ENCODE measurements at regions of chr19 and their contacts with region 1.

Region 1: DNA sequence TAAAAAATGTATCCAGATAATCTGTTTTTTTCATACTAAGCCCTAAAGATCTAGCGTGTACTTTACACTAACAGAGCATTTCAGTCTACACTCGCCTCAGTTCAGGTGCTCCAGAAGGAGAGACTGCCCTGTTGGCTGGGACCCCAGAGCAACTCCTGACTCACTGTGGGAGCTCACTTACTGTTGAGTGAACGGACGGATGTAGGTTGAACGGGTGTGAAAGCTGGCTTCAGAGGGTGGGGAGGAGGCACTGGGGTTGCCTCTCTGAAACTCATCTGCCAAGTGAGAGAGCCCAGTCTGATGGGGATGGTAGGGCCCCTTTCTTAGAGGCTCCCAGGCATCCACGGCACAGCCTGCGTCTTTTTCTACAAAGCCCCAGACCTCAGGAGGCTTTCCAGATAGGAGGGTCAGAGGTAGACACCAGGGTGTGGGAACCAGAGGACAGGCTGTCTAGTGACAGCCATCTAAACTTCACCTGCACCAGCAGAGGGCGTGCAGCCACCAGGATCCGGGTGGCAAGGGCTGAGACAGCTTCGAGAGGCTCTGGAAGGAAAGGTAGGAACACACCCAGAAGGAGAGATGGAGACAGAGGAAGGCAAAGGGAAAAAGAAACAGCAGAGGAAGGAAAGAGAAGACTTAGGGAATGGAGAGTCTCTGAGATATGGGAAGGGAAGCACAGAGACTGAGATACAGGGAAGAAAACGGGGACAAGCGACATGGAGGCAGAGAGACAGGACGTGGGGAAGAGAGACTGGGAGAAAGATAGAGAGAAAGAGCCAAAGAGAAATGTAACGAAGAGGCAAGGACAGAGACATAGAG is 3.7 kb downstream of the KASH5 start:
- DNase-seq: peak; percentile 40
- ATAC-seq: peak; percentile 96
- H3K4me3 ChIP-seq: no peak overlapping the region
- H3K27ac ChIP-seq: no peak overlapping the region
- H3K4me1 ChIP-seq: no peaks in the 10 kb centered on the region; the same call in 1 of the 2 replicates
- H3K27me3 ChIP-seq: no peaks in the 10 kb centered on the region
- CTCF ChIP-seq: peak; percentile 84 to 97 (median 90); a peak in 5 of 6 replicates
- EP300 ChIP-seq: no peak
- POLR2A ChIP-seq: no peak
- RAD21 ChIP-seq: peak; percentile 97

Region 2: GRCh38 chr19:49165111-49165750 is 226.6 kb before region 1 on chr19:
- CTCF ChIA-PET with region 1: no interaction called
- POLR2A ChIA-PET with region 1: no interaction called
- RAD21 ChIA-PET with region 1: no interaction called
- SMC1A ChIA-PET with region 1: no interaction called
- in situ Hi-C with region 1: no loop called
- intact Hi-C with region 1: no loop called
- DNase-seq: no peak
- ATAC-seq: no peak
- H3K4me3 ChIP-seq: no peak overlapping the region
- H3K27ac ChIP-seq: no peak overlapping the region
- H3K4me1 ChIP-seq: no peaks in the 10 kb centered on the region
- H3K27me3 ChIP-seq: no peaks in the 10 kb centered on the region; a peak in 1 of 4 replicates
- CTCF ChIP-seq: no peak
- EP300 ChIP-seq: no peak
- POLR2A ChIP-seq: no peak
- RAD21 ChIP-seq: no peak

Region 3: DNA sequence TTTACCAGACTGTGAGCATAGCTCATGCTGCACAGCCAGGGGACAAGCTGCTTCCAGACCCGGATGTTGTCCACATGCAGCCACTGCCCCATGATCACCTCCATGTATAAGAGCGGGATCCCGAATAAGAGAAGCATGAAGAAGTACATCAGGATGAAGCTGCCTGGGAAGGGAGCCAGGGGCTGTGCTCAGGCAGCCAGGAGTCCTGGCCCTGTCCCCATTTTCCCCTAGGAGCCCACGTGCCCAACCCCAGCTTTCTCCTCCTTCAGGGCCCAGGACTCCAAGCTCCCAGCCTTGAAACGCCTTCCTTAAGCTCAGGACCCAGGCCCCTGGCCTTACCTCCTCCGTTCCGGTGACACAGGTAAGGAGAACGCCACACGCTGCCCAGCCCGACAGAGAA is 136.1 kb before region 1 on chr19:
- CTCF ChIA-PET with region 1: no interaction called
- POLR2A ChIA-PET with region 1: no interaction called
- RAD21 ChIA-PET with region 1: no interaction called
- SMC1A ChIA-PET with region 1: no interaction called
- in situ Hi-C with region 1: no loop called
- intact Hi-C with region 1: no loop called
- DNase-seq: no peak
- ATAC-seq: no peak
- H3K4me3 ChIP-seq: no peak overlapping the region
- H3K27ac ChIP-seq: no peak overlapping the region
- H3K4me1 ChIP-seq: no peaks in the 10 kb centered on the region
- H3K27me3 ChIP-seq: peaks cover 0 to 3% of the 10 kb centered on the region in 2 experiments; a peak in 2 of 4 replicates
- CTCF ChIP-seq: no peak
- EP300 ChIP-seq: no peak
- POLR2A ChIP-seq: no peak
- RAD21 ChIP-seq: no peak

Region 4: GRCh38 chr19:49403404-49404187 is 11.8 kb after region 1 on chr19:
- CTCF ChIA-PET with region 1: interaction called, 11 read pairs
- POLR2A ChIA-PET with region 1: no interaction called
- RAD21 ChIA-PET with region 1: interaction called, 4 read pairs
- SMC1A ChIA-PET with region 1: interaction called, 11 read pairs
- in situ Hi-C with region 1: no loop called
- intact Hi-C with region 1: no loop called
- DNase-seq: no peak
- ATAC-seq: peak; percentile 70
- H3K4me3 ChIP-seq: no peak overlapping the region
- H3K27ac ChIP-seq: no peak overlapping the region
- H3K4me1 ChIP-seq: peaks cover 6% of the 10 kb centered on the region
- H3K27me3 ChIP-seq: no peaks in the 10 kb centered on the region
- CTCF ChIP-seq: no peak
- EP300 ChIP-seq: no peak
- POLR2A ChIP-seq: no peak
- RAD21 ChIP-seq: no peak

Region 5: GRCh38 chr19:49415102-49415809 is 23.5 kb after region 1 on chr19:
- CTCF ChIA-PET with region 1: interaction called, 19 read pairs
- POLR2A ChIA-PET with region 1: interaction called, 3 read pairs
- RAD21 ChIA-PET with region 1: interaction called, 4 read pairs
- SMC1A ChIA-PET with region 1: interaction called, 5 read pairs
- in situ Hi-C with region 1: no loop called
- intact Hi-C with region 1: no loop called
- DNase-seq: peak; percentile 41
- ATAC-seq: peak; percentile 91
- H3K4me3 ChIP-seq: no peak overlapping the region
- H3K27ac ChIP-seq: no peak overlapping the region
- H3K4me1 ChIP-seq: 0 out of 2 replicates have a peak, but pooled peaks cover 3% of the 10 kb centered on the region
- H3K27me3 ChIP-seq: peaks cover 1 to 8% of the 10 kb centered on the region in 2 experiments; a peak in 3 of 4 replicates
- CTCF ChIP-seq: no peak
- EP300 ChIP-seq: peak; percentile 93 to 96; a peak in 3 of 4 replicates
- POLR2A ChIP-seq: no peak
- RAD21 ChIP-seq: no peak

Region 6: DNA sequence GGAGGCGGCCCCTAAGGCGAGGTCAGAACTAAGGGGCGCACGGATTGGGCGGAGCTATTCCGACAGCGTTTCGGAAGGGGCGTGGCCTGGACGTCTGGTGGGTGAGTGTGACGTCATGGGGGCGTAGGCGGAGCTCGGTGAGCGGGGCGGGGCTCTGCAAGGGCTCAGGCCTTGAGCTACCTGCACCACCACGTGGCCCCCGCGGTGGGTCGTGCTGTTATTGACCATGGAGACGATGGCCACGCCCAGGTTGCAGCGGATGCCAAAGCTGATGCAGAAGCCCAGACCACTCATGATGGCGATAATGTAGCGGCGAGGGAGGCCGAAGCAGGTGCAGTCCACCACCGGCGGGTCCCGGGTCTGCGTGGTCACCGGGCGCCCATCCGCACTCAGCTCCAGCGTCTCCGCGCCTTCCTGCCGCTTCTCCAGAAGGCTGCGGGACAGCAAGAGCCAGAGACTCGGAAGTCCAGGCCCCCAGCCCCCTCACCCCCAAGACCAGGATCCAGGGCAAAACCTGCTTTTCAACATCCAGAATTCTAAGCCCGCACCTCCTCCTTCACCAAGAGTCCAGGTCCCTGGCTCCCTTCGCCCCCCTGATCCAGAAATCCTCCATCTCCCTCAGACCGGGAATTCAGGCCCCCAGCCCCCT is 44.7 kb after region 1 on chr19:
- CTCF ChIA-PET with region 1: interaction called, 47 read pairs
- POLR2A ChIA-PET with region 1: interaction called, 4 read pairs
- RAD21 ChIA-PET with region 1: interaction called, 15 read pairs
- SMC1A ChIA-PET with region 1: interaction called, 5 read pairs
- in situ Hi-C with region 1: loop called (anchors 5 kb)
- intact Hi-C with region 1: no loop called
- DNase-seq: no peak
- ATAC-seq: peak; percentile 73
- H3K4me3 ChIP-seq: no peak overlapping the region
- H3K27ac ChIP-seq: no peak overlapping the region
- H3K4me1 ChIP-seq: no peaks in the 10 kb centered on the region
- H3K27me3 ChIP-seq: peaks cover 11 to 24% of the 10 kb centered on the region in 2 experiments
- CTCF ChIP-seq: no peak
- EP300 ChIP-seq: no peak
- POLR2A ChIP-seq: no peak
- RAD21 ChIP-seq: no peak

Region 7: GRCh38 chr19:49468746-49469447 is 77.1 kb after region 1 on chr19:
- CTCF ChIA-PET with region 1: interaction called, 68 read pairs
- POLR2A ChIA-PET with region 1: interaction called, 3 read pairs
- RAD21 ChIA-PET with region 1: interaction called, 23 read pairs
- SMC1A ChIA-PET with region 1: interaction called, 15 read pairs
- in situ Hi-C with region 1: no loop called
- intact Hi-C with region 1: loop called (anchors 1 kb)
- DNase-seq: peak; percentile 97
- ATAC-seq: peak; percentile 80
- H3K4me3 ChIP-seq: no peak overlapping the region
- H3K27ac ChIP-seq: peak overlapping the region; percentile 33; the same call in 1 of the 2 replicates
- H3K4me1 ChIP-seq: peaks cover 37% of the 10 kb centered on the region
- H3K27me3 ChIP-seq: no peaks in the 10 kb centered on the region
- CTCF ChIP-seq: no peak
- EP300 ChIP-seq: peak in 1 of 2 experiments; percentile 66; a peak in 1 of 4 replicates
- POLR2A ChIP-seq: no peak
- RAD21 ChIP-seq: no peak

Region 8: DNA sequence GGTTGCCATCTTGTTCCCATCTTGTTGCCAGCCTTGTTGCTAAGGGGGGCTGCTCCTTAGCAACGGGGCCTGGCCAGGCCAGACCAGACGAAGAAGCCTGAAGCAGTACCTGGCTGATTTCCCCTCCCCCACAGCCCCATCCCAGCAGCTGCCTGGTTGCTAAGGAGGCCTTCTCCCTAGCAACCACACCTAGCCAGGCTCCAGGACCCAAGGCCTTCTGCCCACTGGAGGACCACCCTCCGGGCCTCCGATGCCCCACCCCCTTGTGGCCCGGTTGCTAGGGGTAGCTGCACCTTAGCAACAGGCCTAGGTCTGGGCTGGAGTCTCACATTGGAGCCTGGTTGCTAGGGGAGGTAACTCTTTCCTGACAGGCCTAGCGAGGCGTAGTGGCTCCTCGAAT is 193.2 kb after region 1 on chr19:
- CTCF ChIA-PET with region 1: no interaction called
- POLR2A ChIA-PET with region 1: no interaction called
- RAD21 ChIA-PET with region 1: no interaction called
- SMC1A ChIA-PET with region 1: no interaction called
- in situ Hi-C with region 1: no loop called
- intact Hi-C with region 1: no loop called
- DNase-seq: no peak
- ATAC-seq: no peak
- H3K4me3 ChIP-seq: no peak overlapping the region
- H3K27ac ChIP-seq: no peak overlapping the region
- H3K4me1 ChIP-seq: peaks cover 14% of the 10 kb centered on the region
- H3K27me3 ChIP-seq: no peaks in the 10 kb centered on the region
- CTCF ChIP-seq: no peak
- EP300 ChIP-seq: no peak
- POLR2A ChIP-seq: no peak
- RAD21 ChIP-seq: no peak